A549 (cell line): ENCODE measurements at regions of chr17 and their contacts with region 1.

Region 1: DNA sequence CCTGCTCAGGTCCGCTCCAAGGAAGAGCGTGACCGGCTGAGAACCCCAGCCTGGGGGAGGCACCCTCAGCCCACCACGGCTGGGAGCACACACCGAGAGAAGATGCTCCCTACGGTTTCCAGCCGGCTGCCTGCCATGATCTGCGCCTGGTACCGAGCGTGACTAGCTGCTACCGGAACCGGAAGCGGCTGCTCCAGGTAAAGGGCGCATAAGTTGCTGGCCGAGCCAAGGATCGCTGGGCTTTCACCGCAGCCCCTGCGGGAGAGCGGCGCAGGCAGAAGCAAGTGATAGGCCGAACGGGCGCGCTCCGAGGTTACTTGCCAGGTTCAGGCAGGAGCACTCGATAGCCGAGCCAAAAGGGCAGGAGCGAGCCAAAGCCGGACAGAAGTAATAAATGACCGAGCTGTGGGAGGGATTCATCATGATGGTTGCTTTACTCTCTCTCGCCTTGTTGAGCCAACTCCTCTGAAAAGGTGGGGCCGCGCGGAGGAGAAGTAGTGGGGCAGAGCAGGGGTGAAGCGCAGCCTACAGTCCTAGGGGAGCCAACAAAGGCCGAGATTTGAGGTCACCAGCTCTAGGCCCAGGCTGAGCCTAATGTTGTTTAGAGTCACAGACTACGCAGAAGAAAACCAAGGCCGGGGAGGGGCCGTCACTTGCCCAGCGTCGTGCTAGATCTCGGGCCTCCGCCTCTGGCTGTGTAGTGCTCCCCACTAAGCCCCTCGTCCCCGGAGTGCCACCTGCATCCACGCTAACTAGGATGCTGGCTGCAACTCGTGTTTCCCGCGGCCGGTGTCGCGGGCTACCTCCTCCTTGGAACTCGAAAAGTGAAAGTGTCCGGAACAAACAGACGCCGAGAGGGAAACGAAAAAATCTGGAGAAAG is at the start of gene MRPS23:
- DNase-seq: peak; percentile 91 to 99
- ATAC-seq: peak; percentile 93 to 95
- H3K4me3 ChIP-seq: peak within 1 kb of the TSS; percentile 95
- H3K27ac ChIP-seq: peak within 1 kb of the TSS; percentile 93
- H3K4me1 ChIP-seq: peaks cover 54% of the 10 kb centered on the region
- CTCF ChIP-seq: no peak
- EP300 ChIP-seq: no peak
- POLR2A ChIP-seq: peak; percentile 84
- RAD21 ChIP-seq: peak; percentile 28 to 34; a peak in 4 of 5 replicates
- polyA plus RNA-seq, gene MRPS23: 73.2 and 110 TPM in 2 replicates

Region 2: GRCh38 chr17:56908001-56908542 is 942.0 kb before region 1 on chr17:
- CTCF ChIA-PET with region 1: no interaction called
- POLR2A ChIA-PET with region 1: no interaction called
- DNase-seq: peak in 1 of 2 experiments; percentile 53
- ATAC-seq: peak; percentile 33 to 39; a peak in 3 of 6 replicates
- H3K4me3 ChIP-seq: no peak overlapping the region
- H3K27ac ChIP-seq: no peak overlapping the region
- H3K4me1 ChIP-seq: peaks cover 29% of the 10 kb centered on the region; the same call in 2 of the 3 replicates
- CTCF ChIP-seq: no peak
- EP300 ChIP-seq: no peak
- POLR2A ChIP-seq: no peak
- RAD21 ChIP-seq: no peak

Region 3: GRCh38 chr17:57868007-57868909 is 18.1 kb after region 1 on chr17:
- CTCF ChIA-PET with region 1: interaction called, 499 read pairs
- POLR2A ChIA-PET with region 1: interaction called, 7 read pairs
- DNase-seq: peak; percentile 92 to 97
- ATAC-seq: peak; percentile 84 to 91
- H3K4me3 ChIP-seq: no peak overlapping the region
- H3K27ac ChIP-seq: peak overlapping the region; percentile 92 to 95
- H3K4me1 ChIP-seq: peaks cover 69% of the 10 kb centered on the region
- CTCF ChIP-seq: peak; percentile 50
- EP300 ChIP-seq: peak; percentile 44 to 91; a peak in 4 of 5 replicates
- POLR2A ChIP-seq: no peak
- RAD21 ChIP-seq: peak in 1 of 2 experiments; percentile 75

Region 4: DNA sequence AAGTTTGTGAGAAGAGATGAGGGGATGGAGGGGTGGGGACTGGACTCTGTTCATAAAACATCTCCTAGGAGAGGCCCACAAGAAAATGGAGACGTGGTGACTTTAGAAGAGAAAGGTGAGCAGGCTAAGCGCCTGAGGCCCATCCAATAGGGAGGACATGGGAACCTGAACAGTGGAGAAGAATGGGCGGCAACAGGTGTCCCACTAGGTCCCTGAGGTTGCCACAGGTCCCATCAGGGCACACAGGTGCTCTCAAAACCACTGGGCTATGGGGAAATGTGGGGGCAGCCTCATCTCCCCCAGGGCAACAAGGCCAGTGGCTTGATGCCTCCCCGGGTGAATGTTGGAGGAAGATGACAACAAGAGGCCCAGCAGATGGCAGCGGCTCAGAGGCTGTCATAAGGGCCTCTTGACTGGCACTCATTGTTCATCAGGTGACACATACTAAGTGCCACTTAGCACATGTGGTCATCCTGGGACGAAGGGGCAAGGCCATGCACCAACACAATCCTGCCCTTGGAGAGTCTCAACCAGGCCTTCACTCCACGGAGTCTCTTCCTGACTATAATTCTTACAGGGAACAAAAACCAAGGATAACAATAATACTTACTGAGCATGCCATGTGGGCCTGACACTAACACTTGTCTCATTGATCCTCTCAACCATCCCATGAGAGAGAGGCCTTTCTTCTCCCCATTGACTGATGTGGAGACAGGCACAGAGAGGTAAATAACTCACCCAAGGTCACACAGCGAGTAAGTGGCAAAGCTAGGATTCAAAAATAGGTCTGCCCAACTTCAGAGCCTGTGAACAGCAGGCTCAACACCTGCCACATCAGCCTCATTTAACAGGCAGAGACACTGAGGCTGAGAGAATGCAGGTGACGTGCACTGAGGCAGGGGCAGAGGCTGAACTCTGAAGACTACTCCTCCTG is 67.1 kb after region 1 on chr17:
- CTCF ChIA-PET with region 1: no interaction called
- POLR2A ChIA-PET with region 1: no interaction called
- DNase-seq: peak in 1 of 2 experiments; percentile 63
- ATAC-seq: peak; percentile 25 to 53; a peak in 4 of 6 replicates
- H3K4me3 ChIP-seq: no peak overlapping the region
- H3K27ac ChIP-seq: peak overlapping the region; percentile 56 to 74
- H3K4me1 ChIP-seq: peaks cover 76% of the 10 kb centered on the region
- CTCF ChIP-seq: peak; percentile 28
- EP300 ChIP-seq: no peak
- POLR2A ChIP-seq: no peak
- RAD21 ChIP-seq: peak; percentile 35 to 55; a peak in 3 of 5 replicates

Region 5: DNA sequence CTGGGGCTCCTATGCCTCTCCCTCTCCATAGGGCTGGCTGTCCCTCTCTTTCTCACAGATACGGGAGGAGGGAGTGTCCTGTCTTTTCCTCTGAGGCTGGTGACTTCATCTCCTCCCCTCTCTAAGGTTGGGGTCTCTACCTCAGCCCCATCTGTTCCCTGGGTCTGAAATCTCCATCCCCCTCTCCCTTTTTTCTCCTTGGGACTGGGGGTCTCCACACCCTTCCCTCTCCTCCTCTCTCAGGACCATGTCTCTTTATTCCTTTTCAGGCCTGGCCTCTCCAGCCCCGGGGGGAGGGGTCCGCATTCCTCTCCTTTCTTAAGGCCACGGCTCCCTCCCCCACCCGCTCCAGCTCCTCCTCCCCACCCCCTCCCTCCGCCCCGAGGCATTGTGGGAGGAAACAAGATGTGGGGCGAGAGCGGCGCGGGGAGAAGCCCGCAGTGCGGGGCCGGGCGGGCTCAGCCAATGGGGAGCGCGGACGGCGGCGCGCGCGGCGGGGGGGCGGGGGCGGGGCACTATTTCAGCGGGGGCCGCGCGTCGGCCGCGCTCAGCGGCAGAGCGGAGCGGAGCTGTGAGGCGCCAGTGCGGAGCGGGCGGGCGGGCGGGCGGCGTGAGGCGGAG is 232.9 kb after region 1 on chr17 and contains the start of gene DYNLL2:
- CTCF ChIA-PET with region 1: interaction called, 3 read pairs
- POLR2A ChIA-PET with region 1: interaction called, 18 read pairs
- DNase-seq: peak; percentile 91 to 97
- ATAC-seq: peak; percentile 82 to 87
- H3K4me3 ChIP-seq: peak within 1 kb of the TSS; percentile 95
- H3K27ac ChIP-seq: peak within 1 kb of the TSS; percentile 88 to 90
- H3K4me1 ChIP-seq: peaks cover 18% of the 10 kb centered on the region
- CTCF ChIP-seq: no peak
- EP300 ChIP-seq: peak in 1 of 2 experiments; percentile 12; a peak in 1 of 5 replicates
- POLR2A ChIP-seq: peak; percentile 60
- RAD21 ChIP-seq: no peak
- polyA plus RNA-seq, gene DYNLL2: 19.6 TPM in 2 replicates